Spleen (tissue), 13 donors: ENCODE measurements at regions of chr10 and their contacts with region 1.

Region 1: GRCh38 chr10:67849331-67850011 is 11.5 kb upstream of the DNAJC12 start:
- DNase-seq: peak; percentile 98
- H3K4me3 ChIP-seq: peak overlapping the region; percentile 45 to 91 (median 58)
- H3K27ac ChIP-seq: peak overlapping the region; percentile 87 to 94 (median 90)
- H3K4me1 ChIP-seq: peaks cover 4 to 11% (median 10%) of the 10 kb centered on the region in 6 donors
- H3K27me3 ChIP-seq: no peaks in the 10 kb centered on the region
- CTCF ChIP-seq: peak in 7 of 11 experiments; percentile 10 to 45 (median 12)
- POLR2A ChIP-seq: peak in 1 of 3 donors; percentile 23

Region 2: DNA sequence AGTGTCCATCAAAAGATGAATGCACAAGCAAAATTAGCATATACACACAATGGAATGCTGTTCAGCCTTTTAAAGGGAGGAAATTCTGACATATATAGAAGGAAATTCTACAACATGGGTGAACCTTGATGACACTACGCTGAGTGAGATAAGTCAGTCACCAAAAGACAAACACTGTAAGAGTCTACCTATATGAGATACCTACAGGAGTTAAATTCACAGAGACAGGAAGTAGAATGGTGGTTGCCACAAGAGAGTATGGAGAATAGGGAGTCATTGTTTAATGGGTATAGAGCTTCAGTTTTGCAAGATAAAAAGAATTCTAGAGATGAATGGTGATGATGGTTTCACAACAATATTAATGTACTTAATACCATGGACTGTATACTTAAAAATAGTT is 173.8 kb after region 1 on chr10:
- intact Hi-C with region 1: no loop called
- DNase-seq: no peak
- H3K4me3 ChIP-seq: no peak overlapping the region
- H3K27ac ChIP-seq: no peak overlapping the region
- H3K4me1 ChIP-seq: no peaks in the 10 kb centered on the region
- H3K27me3 ChIP-seq: no peaks in the 10 kb centered on the region
- CTCF ChIP-seq: no peak
- POLR2A ChIP-seq: no peak

Region 3: GRCh38 chr10:68208424-68209042 is 359.1 kb after region 1 on chr10:
- intact Hi-C with region 1: loop called (anchors 10 kb)
- DNase-seq: no peak
- H3K4me3 ChIP-seq: no peak overlapping the region
- H3K27ac ChIP-seq: no peak overlapping the region
- H3K4me1 ChIP-seq: no peaks in the 10 kb centered on the region
- H3K27me3 ChIP-seq: no peaks in the 10 kb centered on the region
- CTCF ChIP-seq: peak in 9 of 11 experiments; percentile 16 to 60 (median 41)
- POLR2A ChIP-seq: no peak